Posterior cingulate gyrus (tissue), 11 donors: ENCODE measurements at regions of chr7 and their contacts with region 1.

Region 1: GRCh38 chr7:137169282-137169698 is 174.2 kb downstream of the PTN start:
- DNase-seq: peak; percentile 26 to 93 (median 66)

Region 2: GRCh38 chr7:137196648-137197047 is 27.4 kb after region 1 on chr7:
- intact Hi-C with region 1: no loop called
- DNase-seq: no peak

Region 3: DNA sequence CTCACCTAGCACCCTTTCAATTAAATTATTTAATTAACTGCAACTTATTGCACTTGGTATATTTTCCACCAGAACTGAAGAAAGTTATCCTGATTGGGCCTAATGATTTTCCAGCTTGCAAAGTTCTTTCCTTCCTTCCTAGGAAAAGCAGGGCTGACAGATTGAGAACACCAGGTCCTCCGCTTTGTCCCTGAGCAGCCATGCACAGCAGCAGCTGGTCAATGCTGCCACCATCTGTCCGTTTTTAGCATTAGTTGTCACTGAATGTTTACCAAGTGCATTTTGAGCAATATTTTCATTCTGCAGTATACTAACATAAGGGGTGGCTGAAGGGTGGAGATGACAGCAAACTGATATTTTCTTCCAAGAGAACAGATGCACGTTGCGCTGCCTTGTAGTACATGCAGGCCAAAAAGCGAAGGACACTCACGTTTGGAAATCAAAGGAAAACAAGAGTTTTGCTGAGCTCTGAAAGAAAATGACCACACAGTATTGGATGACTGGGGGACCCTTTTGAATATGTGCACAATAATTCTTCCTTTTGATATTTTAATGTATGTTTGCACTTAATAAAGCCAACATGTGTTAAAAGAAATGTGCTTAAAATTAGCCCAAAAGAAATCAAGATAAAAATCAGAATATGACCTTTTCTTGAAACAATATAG is 423.1 kb after region 1 on chr7:
- intact Hi-C with region 1: loop called (anchors 2 kb)
- DNase-seq: peak; percentile 49 to 95 (median 71)

Region 4: GRCh38 chr7:137694405-137694804 is 525.1 kb after region 1 on chr7:
- intact Hi-C with region 1: no loop called
- DNase-seq: no peak